ENCODE measurements at regions of chr1 and their contacts with region 1.

Region 1: DNA sequence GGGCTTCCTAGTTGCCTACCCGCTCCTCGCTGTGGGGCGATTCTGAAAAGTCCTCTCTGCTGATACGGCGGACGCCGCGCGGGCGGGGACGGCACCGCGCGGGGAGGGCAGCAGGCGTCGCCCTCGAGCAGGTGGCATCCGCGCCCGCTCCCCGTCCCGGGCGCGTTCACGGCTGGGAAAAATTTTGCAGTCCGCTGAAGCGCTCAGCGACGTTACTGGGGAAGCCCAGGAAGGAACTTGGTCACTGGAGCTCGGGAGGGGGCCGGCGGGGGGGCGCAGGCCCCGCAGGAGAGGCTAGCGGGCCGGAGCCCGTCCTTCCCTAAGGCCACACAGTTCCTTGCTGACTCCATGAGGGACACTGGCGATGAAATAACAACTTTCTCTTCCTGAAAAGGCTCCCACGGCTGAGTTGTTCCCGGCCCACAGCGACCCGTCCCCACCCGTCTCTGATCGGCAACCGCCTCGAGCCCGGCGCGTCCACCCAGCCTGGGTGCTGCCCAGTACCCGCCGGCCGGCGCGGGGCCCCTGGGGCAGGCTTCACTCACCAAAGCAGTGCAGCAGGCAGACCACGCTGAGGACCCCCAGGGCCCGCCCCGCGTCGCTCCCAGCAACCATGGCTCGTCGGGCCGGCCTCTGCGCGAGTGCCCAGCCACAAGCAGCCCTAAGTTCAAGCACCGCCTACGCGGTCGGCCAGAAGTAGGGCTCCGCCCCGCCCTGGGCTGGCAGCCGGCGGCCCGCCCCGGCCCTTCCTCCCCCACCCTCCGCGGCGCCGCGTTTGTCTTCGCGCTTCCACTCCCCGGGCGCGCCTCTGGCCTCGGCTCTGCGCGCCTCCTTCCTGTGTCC is at the start of gene CD58:
- DNase-seq: no peak
- ATAC-seq: peak; percentile 76
- H3K4me3 ChIP-seq: peak within 1 kb of the TSS; percentile 97
- H3K27ac ChIP-seq: peak within 1 kb of the TSS; percentile 95
- H3K4me1 ChIP-seq: peaks cover 40% of the 10 kb centered on the region
- H3K27me3 ChIP-seq: no peaks in the 10 kb centered on the region
- CTCF ChIP-seq: peak; percentile 69 to 72 (median 70)
- EP300 ChIP-seq: 0 out of 4 replicates have a peak, but pooled peaks have one; percentile 12 to 27
- POLR2A ChIP-seq: peak; percentile 93
- RAD21 ChIP-seq: peak; percentile 32; the same call in 1 of the 2 replicates
- polyA plus RNA-seq, gene CD58: 110 to 125 TPM

Region 2: GRCh38 chr1:116514708-116515525 is 55.7 kb before region 1 on chr1:
- CTCF ChIA-PET with region 1: interaction called, 5 read pairs
- POLR2A ChIA-PET with region 1: interaction called, 5 read pairs
- RAD21 ChIA-PET with region 1: interaction called, 12 read pairs
- SMC1A ChIA-PET with region 1: interaction called, 4 read pairs
- in situ Hi-C with region 1: no loop called
- intact Hi-C with region 1: loop called (anchors 2 kb)
- DNase-seq: peak; percentile 88
- ATAC-seq: peak; percentile 88
- H3K4me3 ChIP-seq: no peak overlapping the region
- H3K27ac ChIP-seq: peak overlapping the region; percentile 85
- H3K4me1 ChIP-seq: peaks cover 52% of the 10 kb centered on the region
- H3K27me3 ChIP-seq: no peaks in the 10 kb centered on the region
- CTCF ChIP-seq: no peak
- EP300 ChIP-seq: peak in 1 of 2 experiments; percentile 57; a peak in 3 of 4 replicates
- POLR2A ChIP-seq: no peak
- RAD21 ChIP-seq: no peak; the same call in 1 of the 2 replicates

Region 3: DNA sequence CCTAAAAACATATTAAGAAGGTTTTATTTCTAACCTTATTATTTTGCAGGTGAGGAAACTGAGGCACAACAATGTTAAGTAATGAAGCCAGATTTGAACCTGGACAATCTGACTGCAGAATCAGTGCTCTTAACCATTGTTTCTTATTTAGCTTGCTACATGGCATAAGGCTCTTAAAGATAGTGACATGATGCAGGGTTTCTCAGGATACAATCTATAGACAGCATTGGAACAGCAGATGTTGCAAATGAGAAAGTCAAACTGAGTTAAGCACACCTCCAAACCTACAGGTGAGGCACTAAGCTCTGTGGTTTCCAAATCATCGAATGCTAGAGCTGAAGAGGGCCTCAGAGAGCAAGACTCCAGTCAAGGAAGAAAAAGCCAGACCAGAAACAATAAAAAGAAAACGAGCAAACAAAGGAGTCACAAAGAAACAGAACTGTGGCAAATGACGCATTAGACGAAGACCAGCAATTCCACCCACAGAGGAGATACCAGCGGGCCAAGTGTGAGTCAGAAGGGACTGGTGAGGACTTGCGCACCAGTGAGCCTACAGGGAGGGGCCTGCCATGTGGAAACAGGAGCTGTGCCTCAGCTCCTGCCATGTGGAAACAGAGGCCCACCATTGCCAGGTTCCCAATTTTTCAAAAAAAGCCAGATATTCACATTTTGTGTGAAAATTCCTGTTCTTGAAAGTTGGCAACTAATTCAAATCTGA is 14.1 kb before region 1 on chr1:
- CTCF ChIA-PET with region 1: interaction called, 30 read pairs
- POLR2A ChIA-PET with region 1: interaction called, 95 read pairs
- RAD21 ChIA-PET with region 1: interaction called, 50 read pairs
- SMC1A ChIA-PET with region 1: interaction called, 65 read pairs
- in situ Hi-C with region 1: no loop called
- intact Hi-C with region 1: loop called (anchors 1 kb)
- DNase-seq: peak; percentile 96
- ATAC-seq: peak; percentile 70
- H3K4me3 ChIP-seq: 0 out of 2 replicates have a peak overlapping the region, but pooled peaks have one; percentile 9
- H3K27ac ChIP-seq: peak overlapping the region; percentile 100
- H3K4me1 ChIP-seq: peaks cover 69% of the 10 kb centered on the region
- H3K27me3 ChIP-seq: no peaks in the 10 kb centered on the region
- CTCF ChIP-seq: no peak; a peak in 1 of 6 replicates
- EP300 ChIP-seq: peak; percentile 80 to 96
- POLR2A ChIP-seq: peak; percentile 64
- RAD21 ChIP-seq: peak; percentile 37; the same call in 1 of the 2 replicates

Region 4: DNA sequence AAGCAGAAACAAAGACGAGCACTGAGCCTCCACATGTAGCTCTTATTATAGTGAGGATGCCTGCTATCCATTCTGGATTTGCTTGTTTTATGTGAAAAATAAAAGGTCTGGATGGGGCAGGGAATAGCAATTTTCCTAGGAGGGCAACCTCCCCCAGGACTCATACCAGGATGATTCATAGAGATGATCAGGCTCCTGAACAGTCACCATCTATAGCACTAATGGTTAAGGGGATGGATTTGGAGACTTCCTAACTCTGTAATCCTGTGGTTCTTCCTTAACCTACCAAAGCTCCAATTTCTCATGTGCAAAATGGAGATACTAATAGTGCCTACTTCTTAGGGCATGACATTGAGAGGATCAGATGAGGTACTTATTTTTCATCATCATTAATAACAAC is 34.7 kb after region 1 on chr1:
- CTCF ChIA-PET with region 1: no interaction called
- POLR2A ChIA-PET with region 1: no interaction called
- RAD21 ChIA-PET with region 1: no interaction called
- SMC1A ChIA-PET with region 1: no interaction called
- in situ Hi-C with region 1: no loop called
- intact Hi-C with region 1: no loop called
- DNase-seq: no peak
- ATAC-seq: no peak
- H3K4me3 ChIP-seq: no peak overlapping the region
- H3K27ac ChIP-seq: no peak overlapping the region
- H3K4me1 ChIP-seq: no peaks in the 10 kb centered on the region
- H3K27me3 ChIP-seq: no peaks in the 10 kb centered on the region
- CTCF ChIP-seq: no peak
- EP300 ChIP-seq: no peak
- POLR2A ChIP-seq: no peak
- RAD21 ChIP-seq: no peak

Region 5: DNA sequence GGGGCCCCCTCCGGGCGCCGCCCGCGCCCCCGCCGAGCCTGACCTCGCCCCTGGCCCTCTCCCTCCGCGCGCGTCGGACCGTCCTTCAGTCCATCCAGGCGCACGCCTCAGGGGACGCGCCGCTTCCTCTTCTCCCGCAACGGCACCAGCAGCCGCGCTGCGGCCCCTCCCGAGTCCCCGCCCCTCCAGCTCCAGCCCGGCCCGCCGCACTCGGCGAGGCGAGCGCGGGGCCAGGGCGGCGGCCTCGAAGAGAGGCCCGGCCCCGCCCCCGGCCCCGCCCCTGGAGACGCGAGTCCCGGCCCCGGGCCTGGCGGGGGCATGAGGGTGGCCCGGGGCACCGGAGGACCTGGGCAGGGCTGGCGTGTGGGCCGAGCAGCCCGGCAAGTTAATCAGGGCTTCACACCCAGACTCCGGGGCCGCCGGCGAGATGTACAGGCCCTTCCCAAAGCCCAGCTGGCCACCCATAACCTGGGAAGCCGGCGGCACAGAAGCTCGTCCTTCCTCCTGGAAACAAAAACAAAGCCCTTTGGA is 97.1 kb after region 1 on chr1 and contains the start of gene IGSF3:
- CTCF ChIA-PET with region 1: interaction called, 137 read pairs
- POLR2A ChIA-PET with region 1: interaction called, 3 read pairs
- RAD21 ChIA-PET with region 1: interaction called, 100 read pairs
- SMC1A ChIA-PET with region 1: interaction called, 67 read pairs
- in situ Hi-C with region 1: loop called (anchors 5 kb)
- intact Hi-C with region 1: loop called (anchors 1 kb)
- DNase-seq: no peak
- ATAC-seq: peak; percentile 84
- H3K4me3 ChIP-seq: peak within 1 kb of the TSS; percentile 67
- H3K27ac ChIP-seq: no peak within 1 kb of the TSS
- H3K4me1 ChIP-seq: no peaks in the 10 kb centered on the region
- H3K27me3 ChIP-seq: peaks cover 0 to 12% of the 10 kb centered on the region in 2 experiments; a peak in 2 of 4 replicates
- CTCF ChIP-seq: no peak
- EP300 ChIP-seq: no peak
- POLR2A ChIP-seq: 0 out of 2 replicates have a peak, but pooled peaks have one; percentile 27
- RAD21 ChIP-seq: no peak
- polyA plus RNA-seq, gene IGSF3: 1.4 to 2.3 TPM

Region 6: GRCh38 chr1:116817582-116818064 is 247.0 kb after region 1 on chr1:
- CTCF ChIA-PET with region 1: interaction called, 6 read pairs
- POLR2A ChIA-PET with region 1: interaction called, 4 read pairs
- RAD21 ChIA-PET with region 1: interaction called, 7 read pairs
- SMC1A ChIA-PET with region 1: interaction called, 5 read pairs
- in situ Hi-C with region 1: no loop called
- intact Hi-C with region 1: loop called (anchors 2 kb)
- DNase-seq: no peak
- ATAC-seq: peak; percentile 91
- H3K4me3 ChIP-seq: no peak overlapping the region
- H3K27ac ChIP-seq: no peak overlapping the region
- H3K4me1 ChIP-seq: peaks cover 4% of the 10 kb centered on the region; the same call in 1 of the 2 replicates
- H3K27me3 ChIP-seq: no peaks in the 10 kb centered on the region
- CTCF ChIP-seq: peak; percentile 76 to 78 (median 77)
- EP300 ChIP-seq: no peak
- POLR2A ChIP-seq: no peak
- RAD21 ChIP-seq: peak; percentile 90

Region 7: DNA sequence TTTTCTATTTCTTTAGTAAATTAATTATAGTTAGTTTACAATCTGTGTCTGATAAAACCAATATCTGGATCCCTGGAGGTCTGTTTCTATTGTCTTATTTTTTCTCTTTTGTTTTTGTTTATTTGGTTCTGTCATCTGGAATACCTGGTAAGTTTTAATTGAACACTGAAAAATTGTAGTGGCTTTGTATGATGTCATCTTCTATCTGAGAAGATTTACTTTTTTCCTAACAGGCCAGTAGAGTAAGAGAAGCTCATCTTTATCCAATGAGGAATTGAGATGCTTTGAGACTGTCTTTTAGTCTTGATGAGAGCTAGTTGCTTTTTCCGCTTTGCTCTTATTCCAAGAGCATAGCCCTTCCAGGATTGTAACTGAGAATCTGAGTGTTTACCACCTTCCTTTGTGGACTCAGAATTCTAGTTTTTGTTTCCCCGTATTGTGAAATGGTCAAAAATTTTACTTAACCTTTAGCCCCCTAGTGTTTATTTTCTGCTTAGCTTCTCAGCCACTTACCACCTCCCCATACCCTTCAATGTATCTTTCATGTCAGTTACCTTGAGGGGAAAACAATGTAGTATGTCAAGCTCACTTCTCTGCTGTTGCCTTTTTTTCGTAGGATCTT is 364.1 kb after region 1 on chr1:
- CTCF ChIA-PET with region 1: interaction called, 5 read pairs
- POLR2A ChIA-PET with region 1: no interaction called
- RAD21 ChIA-PET with region 1: interaction called, 3 read pairs
- SMC1A ChIA-PET with region 1: interaction called, 6 read pairs
- in situ Hi-C with region 1: no loop called
- intact Hi-C with region 1: loop called (anchors 10 kb)
- DNase-seq: no peak
- ATAC-seq: peak; percentile 83
- H3K4me3 ChIP-seq: no peak overlapping the region
- H3K27ac ChIP-seq: no peak overlapping the region
- H3K4me1 ChIP-seq: no peaks in the 10 kb centered on the region
- H3K27me3 ChIP-seq: no peaks in the 10 kb centered on the region
- CTCF ChIP-seq: peak; percentile 37 to 54 (median 43); a peak in 5 of 6 replicates
- EP300 ChIP-seq: no peak
- POLR2A ChIP-seq: no peak
- RAD21 ChIP-seq: peak; percentile 39; the same call in 1 of the 2 replicates

Region 8: DNA sequence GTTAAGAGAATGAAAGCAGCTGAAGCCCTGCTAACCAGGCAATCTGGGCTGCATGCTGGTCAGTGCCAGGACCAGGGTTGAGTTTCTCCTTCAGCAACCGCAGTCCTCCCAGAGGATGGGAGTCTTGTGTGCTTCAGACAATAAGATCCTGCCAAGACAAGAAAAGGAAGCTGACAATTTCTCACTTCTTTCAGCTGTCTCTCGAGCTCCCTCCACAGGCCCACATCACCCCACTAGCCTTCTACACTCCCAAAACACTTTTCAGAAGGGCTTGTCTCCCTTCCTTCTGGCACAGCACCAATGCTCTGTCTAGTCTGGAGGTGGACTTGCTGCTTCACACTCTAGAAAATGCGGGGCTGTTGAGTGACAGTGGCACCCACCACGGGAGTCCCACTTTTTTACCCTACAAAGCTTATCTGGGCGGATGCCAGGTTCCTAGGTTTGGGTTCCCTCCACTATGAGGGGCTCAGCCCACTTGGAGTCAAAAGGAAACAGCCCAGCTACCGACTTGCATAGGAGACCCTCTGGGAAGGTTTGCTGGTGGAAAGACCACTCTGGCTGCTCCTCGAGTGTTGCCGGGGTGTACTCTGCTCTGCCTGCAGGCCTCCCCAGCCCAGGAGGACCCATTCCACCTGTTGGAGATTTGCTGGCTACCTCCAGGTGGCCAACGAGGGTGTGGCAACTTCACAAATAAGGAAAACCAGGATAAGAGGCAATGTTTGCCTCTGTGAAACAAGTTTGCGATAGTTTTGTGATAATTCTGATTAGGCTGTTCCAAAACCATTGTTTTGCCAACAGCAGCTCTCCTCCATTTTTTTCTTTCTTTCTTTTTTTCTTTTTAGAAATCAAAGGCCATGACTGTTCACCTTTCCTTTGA is 1104.2 kb after region 1 on chr1:
- CTCF ChIA-PET with region 1: no interaction called
- POLR2A ChIA-PET with region 1: no interaction called
- RAD21 ChIA-PET with region 1: no interaction called
- SMC1A ChIA-PET with region 1: no interaction called
- in situ Hi-C with region 1: loop called (anchors 25 kb)
- intact Hi-C with region 1: no loop called
- DNase-seq: no peak
- ATAC-seq: peak; percentile 80
- H3K4me3 ChIP-seq: no peak overlapping the region
- H3K27ac ChIP-seq: no peak overlapping the region
- H3K4me1 ChIP-seq: peaks cover 12% of the 10 kb centered on the region
- H3K27me3 ChIP-seq: peaks cover 8 to 10% of the 10 kb centered on the region in 2 experiments
- CTCF ChIP-seq: peak; percentile 70 to 74 (median 74); a peak in 5 of 6 replicates
- EP300 ChIP-seq: no peak
- POLR2A ChIP-seq: no peak
- RAD21 ChIP-seq: peak; percentile 86

Measured in GM12878 (cell line).